ENCODE measurements at regions of chr10 and their contacts with region 1.

Region 1: DNA sequence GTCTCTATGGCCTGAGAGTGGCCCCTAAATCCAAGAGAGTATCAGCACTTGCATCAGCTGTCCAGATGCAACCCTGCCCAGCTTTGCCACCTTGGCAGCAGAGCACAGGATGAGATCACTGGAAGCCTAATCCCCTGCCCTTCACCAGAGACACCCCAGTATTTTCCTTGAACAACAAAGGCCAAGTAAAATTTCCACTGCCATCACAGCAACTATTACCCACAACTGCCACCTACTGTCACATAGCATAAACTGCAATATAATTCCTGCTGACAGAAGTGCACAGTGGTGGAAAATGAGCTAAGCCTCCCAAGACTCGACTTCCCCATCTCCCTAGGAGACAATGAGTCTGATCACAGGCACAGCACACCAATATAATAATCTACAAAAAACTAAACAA is 462.8 kb upstream of the ZWINT start:
- DNase-seq: peak; percentile 19
- ATAC-seq: peak; percentile 51
- H3K4me3 ChIP-seq: no peak overlapping the region
- H3K4me3 Mint-ChIP-seq: no peak overlapping the region
- H3K27ac ChIP-seq: no peak overlapping the region
- H3K27ac Mint-ChIP-seq: no peak overlapping the region
- H3K4me1 ChIP-seq: no peaks in the 10 kb centered on the region
- H3K4me1 Mint-ChIP-seq: no peaks in the 10 kb centered on the region
- H3K27me3 ChIP-seq: no peaks in the 10 kb centered on the region
- H3K27me3 Mint-ChIP-seq: no peaks in the 10 kb centered on the region
- CTCF ChIP-seq: peak; percentile 43

Region 2: GRCh38 chr10:56470701-56471100 is 353.1 kb before region 1 on chr10:
- CTCF ChIA-PET with region 1: no interaction called
- POLR2A ChIA-PET with region 1: no interaction called
- intact Hi-C with region 1: loop called (anchors 5 kb)
- DNase-seq: no peak
- ATAC-seq: no peak
- H3K4me3 ChIP-seq: no peak overlapping the region
- H3K4me3 Mint-ChIP-seq: no peak overlapping the region
- H3K27ac ChIP-seq: no peak overlapping the region
- H3K27ac Mint-ChIP-seq: no peak overlapping the region
- H3K4me1 ChIP-seq: no peaks in the 10 kb centered on the region
- H3K4me1 Mint-ChIP-seq: no peaks in the 10 kb centered on the region
- H3K27me3 ChIP-seq: no peaks in the 10 kb centered on the region
- H3K27me3 Mint-ChIP-seq: no peaks in the 10 kb centered on the region
- CTCF ChIP-seq: no peak

Region 3: GRCh38 chr10:56605051-56605450 is 218.8 kb before region 1 on chr10:
- CTCF ChIA-PET with region 1: no interaction called
- POLR2A ChIA-PET with region 1: no interaction called
- intact Hi-C with region 1: no loop called
- DNase-seq: no peak
- ATAC-seq: no peak
- H3K4me3 ChIP-seq: no peak overlapping the region
- H3K4me3 Mint-ChIP-seq: no peak overlapping the region
- H3K27ac ChIP-seq: no peak overlapping the region
- H3K27ac Mint-ChIP-seq: no peak overlapping the region
- H3K4me1 ChIP-seq: no peaks in the 10 kb centered on the region
- H3K4me1 Mint-ChIP-seq: no peaks in the 10 kb centered on the region
- H3K27me3 ChIP-seq: peaks cover 0 to 4% (median 0%) of the 10 kb centered on the region in 4 experiments
- H3K27me3 Mint-ChIP-seq: no peaks in the 10 kb centered on the region
- CTCF ChIP-seq: no peak

Region 4: DNA sequence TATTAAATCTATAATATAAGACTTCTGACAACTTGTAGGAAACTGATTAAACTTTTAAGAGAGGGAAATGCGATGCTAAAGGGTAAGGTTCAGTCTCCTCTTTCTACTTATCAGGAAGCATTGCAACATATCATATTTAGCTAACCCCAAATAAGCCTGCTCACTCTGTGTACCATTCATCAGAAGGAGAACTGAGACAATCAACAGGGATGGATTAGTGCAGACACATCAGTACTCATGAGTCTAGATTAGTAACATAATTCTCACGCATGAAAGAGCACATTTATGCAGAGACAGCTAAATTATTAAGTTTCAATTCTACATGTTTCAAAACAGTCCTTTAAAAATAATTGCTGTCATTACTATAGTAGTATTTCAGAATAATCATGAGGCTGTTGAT is 108.6 kb before region 1 on chr10:
- CTCF ChIA-PET with region 1: no interaction called
- POLR2A ChIA-PET with region 1: no interaction called
- intact Hi-C with region 1: no loop called
- DNase-seq: no peak
- ATAC-seq: no peak
- H3K4me3 ChIP-seq: no peak overlapping the region
- H3K4me3 Mint-ChIP-seq: no peak overlapping the region
- H3K27ac ChIP-seq: no peak overlapping the region
- H3K27ac Mint-ChIP-seq: no peak overlapping the region
- H3K4me1 ChIP-seq: no peaks in the 10 kb centered on the region
- H3K4me1 Mint-ChIP-seq: no peaks in the 10 kb centered on the region
- H3K27me3 ChIP-seq: no peaks in the 10 kb centered on the region
- H3K27me3 Mint-ChIP-seq: no peaks in the 10 kb centered on the region
- CTCF ChIP-seq: no peak

Region 5: GRCh38 chr10:56782503-56782902 is 41.3 kb before region 1 on chr10:
- CTCF ChIA-PET with region 1: no interaction called
- POLR2A ChIA-PET with region 1: no interaction called
- intact Hi-C with region 1: no loop called
- DNase-seq: no peak
- ATAC-seq: no peak
- H3K4me3 ChIP-seq: no peak overlapping the region
- H3K4me3 Mint-ChIP-seq: no peak overlapping the region
- H3K27ac ChIP-seq: no peak overlapping the region
- H3K27ac Mint-ChIP-seq: no peak overlapping the region
- H3K4me1 ChIP-seq: no peaks in the 10 kb centered on the region
- H3K4me1 Mint-ChIP-seq: no peaks in the 10 kb centered on the region
- H3K27me3 ChIP-seq: no peaks in the 10 kb centered on the region
- H3K27me3 Mint-ChIP-seq: no peaks in the 10 kb centered on the region
- CTCF ChIP-seq: no peak